Activated naive CD4-positive, alpha-beta T cell treated with anti-CD3 and anti-CD28 coated beads for 36 hours (primary cell): ENCODE measurements at regions of chr12 and their contacts with region 1.

Region 1: DNA sequence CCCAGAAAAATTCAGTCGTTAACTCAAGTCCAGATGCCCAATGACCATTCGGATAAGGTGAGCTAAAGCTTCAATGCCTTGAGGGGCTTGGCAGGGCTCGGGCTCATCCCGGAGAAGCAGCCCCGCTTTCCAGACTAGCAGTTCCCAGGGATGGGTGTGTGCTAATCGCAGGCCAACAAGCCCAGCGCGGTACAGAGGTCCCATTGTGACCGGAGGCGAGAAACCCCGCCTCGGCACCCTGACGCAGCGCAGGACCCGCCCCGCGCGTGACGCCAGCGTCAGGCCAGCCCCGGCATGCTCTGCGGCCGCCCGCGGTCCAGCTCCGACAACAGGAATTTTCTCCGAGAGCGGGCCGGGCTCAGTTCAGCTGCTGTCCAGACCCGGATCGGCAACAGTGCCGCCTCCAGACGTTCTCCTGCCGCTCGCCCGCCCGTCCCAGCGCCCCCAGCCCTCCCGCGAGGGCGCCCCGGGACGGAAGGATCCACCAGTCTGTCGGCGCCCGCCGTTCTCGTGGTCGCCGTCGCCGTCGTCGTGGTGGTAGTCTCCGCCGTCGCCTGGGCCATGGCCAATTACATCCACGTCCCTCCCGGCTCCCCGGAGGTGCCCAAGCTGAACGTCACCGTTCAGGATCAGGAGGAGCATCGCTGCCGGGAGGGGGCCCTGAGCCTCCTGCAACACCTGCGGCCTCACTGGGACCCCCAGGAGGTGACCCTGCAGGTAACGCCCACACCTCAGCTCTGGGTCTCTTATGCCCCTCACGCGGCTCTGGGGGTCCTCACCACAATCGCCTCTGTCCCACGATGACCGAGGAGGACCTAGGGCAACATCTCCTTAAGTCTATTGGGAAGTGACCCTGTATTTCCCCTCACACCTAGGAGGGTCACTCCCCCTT is at the start of gene ETNK1:
- DNase-seq: peak; percentile 87
- H3K4me3 Mint-ChIP-seq: peak within 1 kb of the TSS; percentile 93
- H3K27ac Mint-ChIP-seq: peak within 1 kb of the TSS; percentile 90
- H3K4me1 Mint-ChIP-seq: peaks cover 28% of the 10 kb centered on the region
- H3K27me3 Mint-ChIP-seq: no peaks in the 10 kb centered on the region
- total RNA-seq, gene ETNK1: 35.9 to 39.4 TPM

Region 2: DNA sequence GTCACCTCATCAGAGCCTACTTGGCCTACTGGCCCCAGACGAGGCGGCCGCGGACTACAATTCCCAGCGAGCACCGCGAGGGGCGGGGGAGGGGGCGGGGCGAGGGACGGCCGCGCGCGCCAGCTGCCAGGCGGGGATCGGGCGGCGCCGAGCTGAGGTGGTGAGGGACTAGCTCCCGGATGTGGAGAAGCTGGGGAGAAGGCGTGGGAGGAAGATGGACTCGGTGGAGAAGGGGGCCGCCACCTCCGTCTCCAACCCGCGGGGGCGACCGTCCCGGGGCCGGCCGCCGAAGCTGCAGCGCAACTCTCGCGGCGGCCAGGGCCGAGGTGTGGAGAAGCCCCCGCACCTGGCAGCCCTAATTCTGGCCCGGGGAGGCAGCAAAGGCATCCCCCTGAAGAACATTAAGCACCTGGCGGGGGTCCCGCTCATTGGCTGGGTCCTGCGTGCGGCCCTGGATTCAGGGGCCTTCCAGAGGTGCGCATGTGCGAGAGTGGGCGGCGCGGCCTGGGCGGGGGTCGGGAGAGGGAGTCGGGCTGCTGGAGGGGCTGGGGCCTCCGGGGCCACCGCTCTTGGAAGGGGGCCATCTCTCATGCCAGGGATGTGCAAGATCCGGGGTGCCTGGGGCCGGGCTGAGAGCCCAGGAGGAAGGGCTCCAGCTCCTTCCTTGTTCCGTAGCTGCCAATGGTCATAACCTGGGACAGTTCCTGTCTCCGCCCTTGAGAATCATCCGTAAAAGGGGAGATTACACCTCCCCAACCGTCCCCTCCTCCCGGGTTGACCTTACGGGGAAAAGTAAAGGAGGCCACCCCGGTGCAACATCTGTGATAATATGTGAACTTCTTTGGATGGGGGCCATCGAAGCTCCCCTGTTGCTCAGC is 578.8 kb before region 1 on chr12 and contains the start of gene CMAS:
- CTCF ChIA-PET with region 1: no interaction called
- intact Hi-C with region 1: loop called (anchors 1 kb)
- DNase-seq: peak; percentile 84
- H3K4me3 Mint-ChIP-seq: peak within 1 kb of the TSS; percentile 95
- H3K27ac Mint-ChIP-seq: peak within 1 kb of the TSS; percentile 84
- H3K4me1 Mint-ChIP-seq: peaks cover 39% of the 10 kb centered on the region
- H3K27me3 Mint-ChIP-seq: no peaks in the 10 kb centered on the region
- total RNA-seq, gene CMAS: 47.3 to 48.5 TPM

Region 3: DNA sequence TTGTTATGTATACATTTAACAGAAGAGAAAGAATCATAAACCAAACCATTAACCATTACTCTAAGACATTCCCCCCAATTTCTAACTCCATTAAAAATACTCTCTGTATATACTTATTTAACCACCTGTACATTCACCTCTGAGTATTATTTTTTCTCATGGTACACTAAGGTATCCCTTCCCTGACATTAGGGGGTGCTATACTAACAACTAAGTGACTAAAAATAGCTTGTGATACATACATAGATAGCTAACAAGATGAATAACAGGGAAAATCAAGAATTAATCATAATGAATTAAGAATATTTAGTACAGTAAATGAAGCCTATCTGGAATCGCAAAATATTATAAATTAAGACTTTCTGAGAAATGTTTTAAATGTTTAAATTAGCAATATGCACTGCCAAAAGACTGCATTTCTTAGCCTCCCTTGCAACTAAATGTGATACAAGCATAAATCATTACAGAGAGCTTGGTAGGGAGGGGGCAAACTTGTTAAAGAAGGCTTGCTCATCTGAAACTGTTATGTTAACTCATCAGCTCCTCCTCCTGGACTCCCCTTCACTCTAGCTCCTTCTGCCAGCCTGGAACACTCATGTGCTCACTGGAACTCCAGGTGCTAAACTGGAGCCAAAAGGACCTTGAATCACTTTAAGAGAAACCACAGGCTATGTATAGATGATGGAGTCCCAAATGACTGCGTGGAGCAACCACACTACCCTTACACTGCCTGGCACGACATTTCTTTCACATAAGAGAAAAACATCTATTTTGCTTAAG is 95.6 kb before region 1 on chr12:
- CTCF ChIA-PET with region 1: interaction called, 10 read pairs
- intact Hi-C with region 1: no loop called
- DNase-seq: no peak
- H3K4me3 Mint-ChIP-seq: no peak overlapping the region
- H3K27ac Mint-ChIP-seq: no peak overlapping the region
- H3K4me1 Mint-ChIP-seq: peaks cover 5% of the 10 kb centered on the region
- H3K27me3 Mint-ChIP-seq: no peaks in the 10 kb centered on the region

Region 4: GRCh38 chr12:22598141-22598762 is 26.9 kb before region 1 on chr12:
- CTCF ChIA-PET with region 1: no interaction called
- intact Hi-C with region 1: loop called (anchors 2 kb)
- DNase-seq: no peak
- H3K4me3 Mint-ChIP-seq: no peak overlapping the region
- H3K27ac Mint-ChIP-seq: no peak overlapping the region
- H3K4me1 Mint-ChIP-seq: peaks cover 7% of the 10 kb centered on the region
- H3K27me3 Mint-ChIP-seq: no peaks in the 10 kb centered on the region